CD4-positive, alpha-beta T cell (primary cell): ENCODE measurements at regions of chr2 and their contacts with region 1.

Region 1: DNA sequence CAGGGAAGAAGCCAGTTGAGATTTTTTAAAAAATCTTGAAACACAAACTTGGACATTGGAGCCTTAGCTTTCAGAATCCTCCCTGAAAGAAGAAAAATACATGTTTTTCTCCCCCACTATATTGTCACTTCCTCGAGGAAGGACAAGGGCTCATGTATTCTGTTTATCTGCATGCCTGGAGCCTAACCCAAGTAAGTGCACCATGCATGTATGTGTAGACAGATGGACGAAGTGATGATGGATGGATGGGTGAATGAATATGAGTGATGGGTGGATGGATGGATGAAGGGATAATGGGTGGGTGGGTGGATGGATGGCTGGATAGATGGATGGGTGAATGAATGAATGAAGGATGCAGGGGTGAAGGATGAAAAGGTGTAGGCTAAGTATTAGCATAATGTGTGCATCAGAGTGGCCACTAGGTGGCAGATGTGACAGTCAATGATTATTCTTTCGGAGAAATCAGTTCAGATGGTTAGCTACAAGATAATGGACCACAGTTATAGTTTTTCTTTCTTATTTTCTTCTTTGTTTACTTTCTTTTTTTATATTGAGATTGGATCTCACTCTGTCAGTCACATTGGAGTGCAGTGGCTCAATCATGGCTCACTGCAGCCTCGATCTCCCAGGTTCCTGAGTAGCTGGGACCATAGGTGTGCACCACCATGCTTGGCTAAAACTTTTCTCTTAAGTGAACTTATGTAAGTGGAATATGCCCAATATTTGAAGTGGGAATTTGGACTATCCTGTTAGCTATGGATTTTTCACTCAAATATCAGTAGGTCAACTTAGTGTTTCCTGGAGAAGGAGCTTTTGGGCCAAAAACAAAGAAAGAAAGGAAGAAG is 18.5 kb upstream of the CCDC93 start:
- DNase-seq: peak in 12 of 14 experiments; percentile 9 to 68 (median 18)
- ATAC-seq: peak; percentile 59
- H3K4me3 ChIP-seq: no peak overlapping the region
- H3K4me3 Mint-ChIP-seq: no peak overlapping the region
- H3K27ac ChIP-seq: no peak overlapping the region
- H3K27ac Mint-ChIP-seq: no peak overlapping the region
- H3K4me1 ChIP-seq: no peaks in the 10 kb centered on the region
- H3K4me1 Mint-ChIP-seq: no peaks in the 10 kb centered on the region
- H3K27me3 ChIP-seq: peaks cover 3 to 23% of the 10 kb centered on the region in 2 experiments
- H3K27me3 Mint-ChIP-seq: peaks cover 64% of the 10 kb centered on the region
- CTCF ChIP-seq: peak; percentile 80

Region 2: GRCh38 chr2:118865106-118865505 is 832.7 kb after region 1 on chr2:
- CTCF ChIA-PET with region 1: no interaction called
- POLR2A ChIA-PET with region 1: no interaction called
- intact Hi-C with region 1: loop called in 1 of 2 experiments (anchors 5 kb)
- DNase-seq: peak in 3 of 14 experiments; percentile 34 to 58 (median 56)
- ATAC-seq: peak; percentile 73
- H3K4me3 ChIP-seq: no peak overlapping the region
- H3K4me3 Mint-ChIP-seq: no peak overlapping the region
- H3K27ac ChIP-seq: no peak overlapping the region
- H3K27ac Mint-ChIP-seq: no peak overlapping the region
- H3K4me1 ChIP-seq: no peaks in the 10 kb centered on the region
- H3K4me1 Mint-ChIP-seq: no peaks in the 10 kb centered on the region
- H3K27me3 ChIP-seq: peaks cover 22 to 46% of the 10 kb centered on the region in 2 experiments
- H3K27me3 Mint-ChIP-seq: peaks cover 56% of the 10 kb centered on the region
- CTCF ChIP-seq: peak; percentile 61